ENCODE measurements at regions of chr20 and their contacts with region 1.

Region 1: GRCh38 chr20:23606652-23607049 is 934 bp upstream of the CST9 start:
- DNase-seq: peak; percentile 81

Region 2: DNA sequence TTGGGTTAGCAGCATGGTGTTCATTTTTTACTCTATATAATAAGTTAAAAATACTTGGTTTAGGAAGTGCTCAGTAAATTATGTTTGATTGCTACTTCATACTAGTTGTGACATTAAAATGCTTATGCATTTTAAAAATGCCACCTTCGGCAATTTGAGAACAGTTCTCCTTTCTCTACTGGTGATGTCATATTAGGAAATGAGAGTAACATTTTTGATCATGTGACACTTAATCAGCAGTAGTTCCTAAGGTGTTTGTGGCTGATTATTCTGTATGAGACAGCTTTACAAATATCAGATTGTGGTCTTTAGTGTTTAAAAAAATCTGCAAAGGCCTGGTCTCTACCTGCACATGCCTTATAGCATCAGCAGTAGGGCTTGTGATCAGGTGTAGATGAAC is 240.3 kb before region 1 on chr20:
- intact Hi-C with region 1: loop called (anchors 5 kb)
- DNase-seq: no peak

Region 3: DNA sequence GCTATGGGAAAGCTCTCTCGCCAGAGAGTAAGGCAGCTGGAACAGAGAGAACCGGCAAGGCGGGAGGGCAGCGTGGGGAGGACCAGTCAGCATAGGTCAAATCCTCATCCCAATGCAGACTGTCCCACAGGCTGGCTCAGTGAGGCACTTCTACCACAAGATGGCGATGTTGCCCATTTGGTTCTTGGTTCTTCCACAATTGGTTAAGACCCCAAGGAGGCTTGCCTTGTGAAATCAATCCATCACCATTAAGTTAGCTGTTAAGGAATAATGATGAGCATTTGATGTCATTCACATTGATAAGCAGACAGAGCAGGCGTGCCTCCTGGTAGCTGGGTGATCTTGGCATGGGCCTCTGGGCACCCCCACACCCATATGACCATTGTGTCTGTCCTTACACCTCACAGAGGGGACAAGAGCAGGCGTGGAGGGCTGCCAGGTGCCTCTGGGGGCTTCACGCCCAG is 164.8 kb before region 1 on chr20:
- intact Hi-C with region 1: loop called (anchors 5 kb)
- DNase-seq: peak; percentile 79

Measured in cardiac septum (tissue), 1 donor.